ENCODE measurements at regions of chr5 and their contacts with region 1.

Region 1: DNA sequence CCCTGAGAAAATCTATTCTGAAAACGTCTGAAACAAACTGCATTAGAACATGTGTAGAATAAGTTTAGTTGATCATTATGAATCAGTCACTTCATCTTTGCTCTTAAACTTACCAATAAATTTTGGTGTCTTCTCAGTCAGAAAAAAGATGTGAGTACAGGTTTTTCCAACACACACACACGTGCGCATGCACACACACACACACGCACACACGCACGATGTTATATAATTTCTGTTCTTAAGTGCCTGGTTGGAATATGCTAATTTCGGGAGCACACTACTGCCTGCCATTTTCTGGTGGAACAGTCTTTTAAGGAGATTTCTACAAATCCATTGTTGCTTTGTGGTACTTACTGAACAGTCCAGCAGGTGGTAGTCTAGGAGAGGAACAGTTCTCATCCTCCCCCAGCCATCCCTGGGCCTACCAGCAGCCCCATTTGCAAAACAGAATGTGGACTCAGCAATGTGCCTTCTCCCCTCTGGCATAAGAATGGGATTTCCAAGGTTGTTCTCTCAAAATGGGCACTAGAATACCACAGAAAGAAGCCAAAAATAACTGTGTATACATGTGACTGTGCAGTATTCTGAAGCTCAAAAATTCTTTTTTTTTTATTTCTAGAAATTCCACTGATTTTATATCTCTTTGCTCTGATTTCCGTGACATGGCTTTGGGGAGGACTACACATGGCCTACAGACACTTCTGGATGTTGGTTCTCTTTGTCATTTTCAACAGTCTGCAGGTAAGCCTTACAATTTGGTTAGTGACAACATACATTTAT is 281.3 kb downstream of the ARRDC3 start:
- DNase-seq: peak; percentile 54 to 70 (median 63)
- ATAC-seq: peak; percentile 99
- H3K4me3 ChIP-seq: no peak overlapping the region
- H3K27ac ChIP-seq: no peak overlapping the region
- H3K4me1 ChIP-seq: no peaks in the 10 kb centered on the region
- H3K27me3 ChIP-seq: no peaks in the 10 kb centered on the region
- CTCF ChIP-seq: peak; percentile 65 to 86 (median 69)
- EP300 ChIP-seq: no peak
- POLR2A ChIP-seq: no peak
- RAD21 ChIP-seq: peak; percentile 79 to 93

Region 2: DNA sequence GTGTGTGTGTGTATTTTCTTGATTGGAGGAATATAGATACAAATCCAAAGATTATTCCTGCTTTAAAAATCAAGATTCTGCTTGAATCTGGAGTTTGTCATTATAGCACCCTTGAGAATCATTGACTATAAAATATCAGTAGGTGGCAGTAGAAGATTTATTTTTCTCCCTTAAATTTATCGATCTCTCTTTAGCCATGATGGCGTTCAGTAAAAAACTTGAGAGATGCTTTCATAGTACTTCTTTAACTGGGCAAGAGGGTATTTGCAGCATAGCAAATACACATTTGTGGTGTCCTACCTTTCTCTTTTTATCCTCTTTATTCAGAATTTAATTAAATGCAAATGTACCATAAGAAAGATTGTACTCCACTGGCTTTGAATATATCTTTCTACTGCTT is 235.5 kb before region 1 on chr5:
- CTCF ChIA-PET with region 1: no interaction called
- POLR2A ChIA-PET with region 1: no interaction called
- in situ Hi-C with region 1: no loop called
- intact Hi-C with region 1: loop called (anchors 5 kb)
- DNase-seq: peak; percentile 18 to 47 (median 31)
- ATAC-seq: peak; percentile 84
- H3K4me3 ChIP-seq: no peak overlapping the region
- H3K27ac ChIP-seq: no peak overlapping the region; the same call in 2 of the 3 replicates
- H3K4me1 ChIP-seq: no peaks in the 10 kb centered on the region
- H3K27me3 ChIP-seq: no peaks in the 10 kb centered on the region
- CTCF ChIP-seq: peak; percentile 30 to 73 (median 32); a peak in 3 of 6 replicates
- EP300 ChIP-seq: no peak
- POLR2A ChIP-seq: no peak
- RAD21 ChIP-seq: peak; percentile 68 to 75

Region 3: GRCh38 chr5:91114658-91115057 is 12.9 kb after region 1 on chr5:
- CTCF ChIA-PET with region 1: no interaction called
- POLR2A ChIA-PET with region 1: no interaction called
- in situ Hi-C with region 1: no loop called
- intact Hi-C with region 1: no loop called
- DNase-seq: no peak
- ATAC-seq: no peak
- H3K4me3 ChIP-seq: no peak overlapping the region
- H3K27ac ChIP-seq: no peak overlapping the region
- H3K4me1 ChIP-seq: no peaks in the 10 kb centered on the region
- H3K27me3 ChIP-seq: no peaks in the 10 kb centered on the region
- CTCF ChIP-seq: no peak
- EP300 ChIP-seq: no peak
- POLR2A ChIP-seq: no peak
- RAD21 ChIP-seq: no peak

Region 4: DNA sequence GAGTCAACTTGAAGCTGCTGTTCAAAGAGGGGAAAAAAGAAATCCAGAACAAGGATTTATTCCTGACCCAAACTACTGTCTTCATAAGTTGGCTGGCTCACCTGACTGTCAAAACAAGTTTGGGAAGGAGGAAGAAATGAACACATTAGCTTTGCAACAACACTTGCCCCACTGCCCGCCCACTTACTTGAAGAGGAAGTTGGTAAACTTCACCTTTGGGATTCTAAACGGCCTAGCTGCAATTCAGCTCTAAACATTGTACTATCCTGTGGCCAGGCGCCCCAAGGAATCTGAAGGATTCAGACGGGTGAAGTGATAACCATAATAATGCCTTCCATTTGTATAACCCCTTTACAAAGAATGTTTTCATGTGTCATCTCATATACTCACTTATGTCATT is 81.9 kb after region 1 on chr5:
- CTCF ChIA-PET with region 1: no interaction called
- POLR2A ChIA-PET with region 1: no interaction called
- in situ Hi-C with region 1: no loop called
- intact Hi-C with region 1: loop called (anchors 5 kb)
- DNase-seq: no peak
- ATAC-seq: no peak
- H3K4me3 ChIP-seq: no peak overlapping the region
- H3K27ac ChIP-seq: no peak overlapping the region
- H3K4me1 ChIP-seq: no peaks in the 10 kb centered on the region; a peak in 1 of 5 replicates
- H3K27me3 ChIP-seq: no peaks in the 10 kb centered on the region
- CTCF ChIP-seq: no peak
- EP300 ChIP-seq: no peak
- POLR2A ChIP-seq: no peak
- RAD21 ChIP-seq: no peak

Region 5: GRCh38 chr5:91225848-91226686 is 124.3 kb after region 1 on chr5:
- CTCF ChIA-PET with region 1: interaction called, 7 read pairs
- POLR2A ChIA-PET with region 1: no interaction called
- in situ Hi-C with region 1: no loop called
- intact Hi-C with region 1: loop called (anchors 2 kb)
- DNase-seq: peak in 2 of 4 experiments; percentile 34 to 50
- ATAC-seq: peak; percentile 79
- H3K4me3 ChIP-seq: no peak overlapping the region
- H3K27ac ChIP-seq: no peak overlapping the region
- H3K4me1 ChIP-seq: no peaks in the 10 kb centered on the region
- H3K27me3 ChIP-seq: no peaks in the 10 kb centered on the region
- CTCF ChIP-seq: peak; percentile 52 to 70 (median 57); a peak in 5 of 6 replicates
- EP300 ChIP-seq: no peak
- POLR2A ChIP-seq: no peak
- RAD21 ChIP-seq: peak; percentile 85 to 93

Measured in K562 (cell line).